ENCODE measurements at regions of chr15 and their contacts with region 1.

Region 1: DNA sequence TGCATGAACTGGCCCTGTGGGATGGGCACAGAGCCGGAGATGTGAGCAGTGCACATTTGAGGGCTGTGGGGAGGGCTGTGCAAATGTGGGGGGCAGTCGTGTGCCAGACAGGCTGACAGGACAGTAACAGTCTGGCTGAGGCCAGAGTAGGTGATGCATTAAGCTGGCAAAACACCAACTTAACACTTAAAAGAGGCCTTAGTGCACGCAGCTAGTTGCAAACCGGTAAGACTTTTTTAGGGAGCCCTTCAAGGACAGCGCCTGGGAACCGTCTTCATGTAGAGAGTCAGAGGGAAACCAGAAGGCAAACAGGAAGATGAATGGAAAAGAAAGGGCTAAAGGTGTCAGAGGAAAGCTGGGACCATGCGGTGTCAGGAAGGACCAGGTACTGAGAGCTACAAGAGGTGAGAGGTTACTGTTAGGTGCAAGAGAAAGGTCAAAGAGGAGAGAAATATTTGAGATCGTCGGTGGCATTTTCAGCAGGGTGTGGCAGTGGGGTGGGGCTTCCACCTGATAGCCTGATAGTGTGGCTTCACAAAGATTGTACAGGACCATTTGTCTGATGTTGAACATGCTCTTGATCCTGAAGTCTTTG is 30.0 kb upstream of the CHD2 start:
- DNase-seq: no peak

Region 2: GRCh38 chr15:91787198-91787597 is 1082.9 kb before region 1 on chr15:
- intact Hi-C with region 1: loop called in 1 of 2 experiments (anchors 5 kb)
- DNase-seq: no peak